T-cell (primary cell): ENCODE measurements at regions of chr16 and their contacts with region 1.

Region 1: GRCh38 chr16:11896777-11897176 is 19.0 kb downstream of the GSPT1 start:
- DNase-seq: no peak
- ATAC-seq: no peak
- H3K4me3 ChIP-seq: no peak overlapping the region
- H3K4me3 Mint-ChIP-seq: no peak overlapping the region
- H3K27ac ChIP-seq: no peak overlapping the region
- H3K27ac Mint-ChIP-seq: peak overlapping the region; percentile 2 to 11
- H3K4me1 ChIP-seq: peaks cover 0 to 18% of the 10 kb centered on the region in 2 experiments
- H3K4me1 Mint-ChIP-seq: peaks cover 42 to 49% (median 45%) of the 10 kb centered on the region in 3 donors
- H3K27me3 ChIP-seq: no peaks in the 10 kb centered on the region
- H3K27me3 Mint-ChIP-seq: no peaks in the 10 kb centered on the region

Region 2: DNA sequence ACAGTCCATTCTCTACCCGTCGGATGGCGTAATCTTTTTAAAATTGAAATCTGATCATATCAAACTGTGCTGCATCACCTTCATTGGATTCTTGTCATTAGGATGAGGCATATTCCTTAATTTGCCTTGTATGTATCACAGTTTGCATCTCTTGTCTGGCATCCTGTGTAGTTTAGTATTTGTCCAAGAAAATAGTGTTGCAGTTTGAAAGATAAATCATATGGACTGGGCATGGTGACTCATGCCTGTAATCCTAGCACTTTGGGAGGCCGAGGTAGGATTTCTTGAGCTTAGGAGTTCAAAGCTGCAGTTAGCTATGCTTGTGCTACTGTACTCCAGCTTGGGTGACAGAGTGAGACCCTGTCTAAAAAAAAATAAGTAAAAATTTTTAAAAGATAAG is 39.6 kb before region 1 on chr16:
- CTCF ChIA-PET with region 1: no interaction called
- POLR2A ChIA-PET with region 1: interaction called in 1 of 2 experiments, 12 read pairs
- DNase-seq: no peak
- ATAC-seq: no peak
- H3K4me3 ChIP-seq: no peak overlapping the region
- H3K4me3 Mint-ChIP-seq: no peak overlapping the region
- H3K27ac ChIP-seq: no peak overlapping the region
- H3K27ac Mint-ChIP-seq: no peak overlapping the region
- H3K4me1 ChIP-seq: peaks cover 10 to 18% of the 10 kb centered on the region in 2 experiments
- H3K4me1 Mint-ChIP-seq: peaks cover 39 to 42% (median 40%) of the 10 kb centered on the region in 3 donors
- H3K27me3 ChIP-seq: no peaks in the 10 kb centered on the region
- H3K27me3 Mint-ChIP-seq: no peaks in the 10 kb centered on the region

Region 3: DNA sequence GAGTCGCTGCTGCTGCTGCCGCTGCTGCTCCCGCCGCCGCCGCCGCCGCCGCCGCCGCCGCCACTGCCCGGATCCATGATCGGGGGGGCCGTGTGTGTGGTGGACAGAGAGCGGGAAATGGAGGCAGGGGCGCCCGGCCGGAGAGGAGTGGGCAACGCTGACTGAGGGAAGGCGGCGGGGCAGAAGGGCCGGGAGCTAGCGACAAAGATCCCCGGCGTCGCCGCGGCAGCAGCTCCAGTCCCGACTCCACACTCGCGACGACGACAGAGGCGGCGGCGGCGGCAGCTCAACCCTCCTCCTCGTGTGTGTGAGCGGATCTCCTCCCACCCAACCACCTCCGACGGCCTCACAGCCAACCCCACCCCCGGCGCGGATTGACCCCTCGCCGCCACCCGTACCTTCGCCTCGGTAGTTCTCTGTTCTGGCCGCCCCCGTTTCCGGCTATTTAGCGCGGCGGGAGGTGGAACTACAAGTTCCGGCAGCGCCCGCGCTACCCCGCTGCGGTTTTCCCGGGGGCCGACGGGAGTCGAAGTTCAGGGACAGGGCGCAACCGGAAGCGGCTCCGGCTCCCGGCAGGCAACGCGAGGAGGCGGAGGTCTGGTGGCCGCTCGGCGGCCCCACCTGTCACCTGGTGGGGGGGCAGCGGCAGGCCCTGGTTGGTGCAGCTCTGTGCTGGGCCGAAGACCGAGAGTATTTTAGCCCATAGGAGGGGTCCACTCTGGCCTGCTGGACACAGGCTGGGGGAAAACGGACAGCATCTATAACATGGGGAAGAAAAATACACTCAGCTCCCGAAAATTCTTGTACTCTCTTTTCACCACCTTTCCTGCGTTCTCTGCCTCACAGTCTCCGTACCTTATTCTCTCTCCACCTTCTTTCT is 19.1 kb after region 1 on chr16 and contains the start of gene GSPT1:
- CTCF ChIA-PET with region 1: interaction called, 3 to 10 read pairs
- POLR2A ChIA-PET with region 1: interaction called in 1 of 2 experiments, 4 read pairs
- DNase-seq: peak; percentile 97 to 99 (median 99)
- ATAC-seq: peak; percentile 88 to 95 (median 92)
- H3K4me3 ChIP-seq: peak within 1 kb of the TSS; percentile 85 to 88
- H3K4me3 Mint-ChIP-seq: peak within 1 kb of the TSS; percentile 89 to 93 (median 90)
- H3K27ac ChIP-seq: peak within 1 kb of the TSS; percentile 80
- H3K27ac Mint-ChIP-seq: peak within 1 kb of the TSS; percentile 91 to 97
- H3K4me1 ChIP-seq: peaks cover 21 to 26% of the 10 kb centered on the region in 2 experiments
- H3K4me1 Mint-ChIP-seq: peaks cover 24 to 36% (median 32%) of the 10 kb centered on the region in 3 donors
- H3K27me3 ChIP-seq: peaks cover 0 to 3% of the 10 kb centered on the region in 2 experiments
- H3K27me3 Mint-ChIP-seq: no peaks in the 10 kb centered on the region
- total RNA-seq, gene GSPT1: 84.2 to 166 (median 92.5) TPM

Region 4: GRCh38 chr16:11976850-11977375 is 80.1 kb after region 1 on chr16:
- CTCF ChIA-PET with region 1: interaction called in 1 of 2 experiments, 12 read pairs
- POLR2A ChIA-PET with region 1: no interaction called
- DNase-seq: peak in 4 of 35 experiments; percentile 2 to 9 (median 4)
- ATAC-seq: peak in 2 of 4 experiments; percentile 1 to 11
- H3K4me3 ChIP-seq: peak overlapping the region; percentile 81 to 95
- H3K4me3 Mint-ChIP-seq: peak overlapping the region; percentile 91 to 100 (median 92)
- H3K27ac ChIP-seq: no peak overlapping the region
- H3K27ac Mint-ChIP-seq: peak overlapping the region; percentile 86 to 89
- H3K4me1 ChIP-seq: peaks cover 10 to 27% of the 10 kb centered on the region in 2 experiments
- H3K4me1 Mint-ChIP-seq: peaks cover 37 to 50% (median 47%) of the 10 kb centered on the region in 3 donors
- H3K27me3 ChIP-seq: no peaks in the 10 kb centered on the region
- H3K27me3 Mint-ChIP-seq: no peaks in the 10 kb centered on the region

Region 5: DNA sequence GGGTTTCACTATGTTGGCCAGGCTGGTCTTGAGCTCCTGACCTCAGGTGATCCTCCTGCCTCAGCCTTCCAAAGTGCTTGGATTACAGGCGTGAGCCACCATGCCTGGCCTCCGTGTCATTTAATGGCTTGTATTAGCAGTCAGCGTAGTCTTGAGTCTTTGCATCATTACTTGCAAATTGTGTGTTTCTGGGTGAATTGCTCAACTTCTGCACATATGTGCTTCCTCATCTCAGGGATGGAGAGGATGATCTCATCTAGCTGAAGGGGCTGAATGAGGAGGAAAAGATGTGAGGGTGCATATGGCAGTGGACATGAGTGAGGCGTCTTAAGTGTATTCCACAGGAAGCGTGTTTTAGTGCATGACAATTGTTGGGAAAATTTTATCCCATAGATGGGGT is 235.5 kb after region 1 on chr16:
- CTCF ChIA-PET with region 1: no interaction called
- POLR2A ChIA-PET with region 1: no interaction called
- DNase-seq: no peak
- ATAC-seq: no peak
- H3K4me3 ChIP-seq: no peak overlapping the region
- H3K4me3 Mint-ChIP-seq: no peak overlapping the region
- H3K27ac ChIP-seq: no peak overlapping the region
- H3K27ac Mint-ChIP-seq: no peak overlapping the region
- H3K4me1 ChIP-seq: no peaks in the 10 kb centered on the region
- H3K4me1 Mint-ChIP-seq: no peaks in the 10 kb centered on the region
- H3K27me3 ChIP-seq: no peaks in the 10 kb centered on the region
- H3K27me3 Mint-ChIP-seq: no peaks in the 10 kb centered on the region